Activated CD8-positive, alpha-beta memory T cell treated with anti-CD3 and anti-CD28 coated beads, Interleukin-2, amount 10 ng/mL, durations not matched to agents 7 days and 5 days (primary cell): ENCODE measurements at regions of chr16 and their contacts with region 1.

Region 1: GRCh38 chr16:30902029-30902972 is 5.9 kb downstream of the CTF1 start:
- DNase-seq: peak; percentile 66
- ATAC-seq: peak; percentile 88
- H3K4me3 Mint-ChIP-seq: peak overlapping the region; percentile 81
- H3K27ac Mint-ChIP-seq: peak overlapping the region; percentile 99
- H3K4me1 Mint-ChIP-seq: peaks cover 34% of the 10 kb centered on the region
- H3K27me3 Mint-ChIP-seq: no peaks in the 10 kb centered on the region

Region 2: DNA sequence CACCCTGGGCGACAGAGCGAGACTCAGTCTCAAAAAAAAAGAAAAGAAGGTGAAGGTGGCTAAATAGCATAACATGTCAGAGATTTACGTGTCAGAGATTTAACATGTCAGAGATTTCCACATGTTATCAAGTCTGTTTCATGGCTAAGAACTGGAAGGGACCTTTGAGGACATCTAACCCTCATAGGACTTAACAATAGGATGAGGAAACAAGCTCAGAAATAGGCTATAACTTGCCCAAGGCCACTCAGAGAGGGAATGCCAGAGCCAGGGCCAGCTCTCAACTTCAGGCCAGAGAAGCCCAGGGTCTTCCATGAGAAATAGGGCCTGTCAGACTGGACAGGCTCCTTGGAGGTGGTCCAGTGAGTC is 88.5 kb before region 1 on chr16:
- CTCF ChIA-PET with region 1: interaction called, 18 read pairs
- DNase-seq: no peak
- ATAC-seq: no peak
- H3K4me3 Mint-ChIP-seq: peak overlapping the region; percentile 94
- H3K27ac Mint-ChIP-seq: peak overlapping the region; percentile 88
- H3K4me1 Mint-ChIP-seq: peaks cover 12% of the 10 kb centered on the region
- H3K27me3 Mint-ChIP-seq: peaks cover 2% of the 10 kb centered on the region

Region 3: GRCh38 chr16:30853758-30854157 is 48.5 kb before region 1 on chr16:
- CTCF ChIA-PET with region 1: interaction called, 12 read pairs
- DNase-seq: no peak
- ATAC-seq: no peak
- H3K4me3 Mint-ChIP-seq: no peak overlapping the region
- H3K27ac Mint-ChIP-seq: no peak overlapping the region
- H3K4me1 Mint-ChIP-seq: peaks cover 3% of the 10 kb centered on the region
- H3K27me3 Mint-ChIP-seq: no peaks in the 10 kb centered on the region

Region 4: DNA sequence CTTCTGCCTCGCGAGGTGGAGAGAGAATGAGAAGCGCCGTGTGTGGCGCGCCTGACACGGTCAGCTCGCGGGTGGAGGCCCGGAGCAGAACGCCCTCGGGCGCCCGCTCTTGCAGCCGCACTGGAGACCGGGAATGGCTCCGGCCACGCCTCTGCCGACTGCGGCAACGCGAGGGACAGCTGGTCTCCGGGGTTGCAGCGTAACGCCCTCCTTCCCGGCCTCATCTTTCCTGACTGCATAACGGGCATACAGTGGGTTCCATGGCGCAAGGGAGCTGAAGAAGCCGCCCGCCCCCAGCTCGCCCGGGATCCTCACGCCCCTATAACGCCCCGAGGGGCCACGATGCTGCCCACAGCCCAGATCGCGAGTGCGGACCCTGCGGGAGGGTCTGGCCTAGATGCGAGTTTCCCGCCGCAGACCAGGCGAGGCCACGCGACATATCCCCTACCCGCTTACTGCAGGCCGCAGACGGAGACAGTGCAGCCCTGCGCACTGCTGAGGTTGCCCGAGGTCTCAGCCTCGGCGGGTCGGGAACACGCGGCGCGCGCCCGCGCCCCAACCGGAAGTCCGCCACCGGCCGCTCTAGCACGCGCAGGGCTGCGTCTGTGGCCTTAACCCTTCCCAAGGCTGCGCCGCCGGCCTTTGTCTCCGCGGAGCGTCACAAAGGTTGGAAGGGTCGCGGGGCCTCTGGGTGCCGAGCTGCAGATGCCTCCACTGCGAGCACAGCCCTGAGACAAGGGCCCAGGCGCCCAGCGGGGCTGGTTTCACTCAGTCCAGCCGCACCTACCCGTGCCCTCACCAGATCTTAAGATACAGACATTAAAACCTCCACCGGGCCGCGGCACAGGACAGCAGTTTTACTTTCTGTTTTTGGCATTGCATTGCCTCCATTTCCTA is 27.2 kb before region 1 on chr16:
- CTCF ChIA-PET with region 1: interaction called, 53 read pairs
- DNase-seq: peak; percentile 92
- ATAC-seq: peak; percentile 90
- H3K4me3 Mint-ChIP-seq: peak overlapping the region; percentile 82
- H3K27ac Mint-ChIP-seq: peak overlapping the region; percentile 93
- H3K4me1 Mint-ChIP-seq: peaks cover 37% of the 10 kb centered on the region
- H3K27me3 Mint-ChIP-seq: no peaks in the 10 kb centered on the region

Region 5: DNA sequence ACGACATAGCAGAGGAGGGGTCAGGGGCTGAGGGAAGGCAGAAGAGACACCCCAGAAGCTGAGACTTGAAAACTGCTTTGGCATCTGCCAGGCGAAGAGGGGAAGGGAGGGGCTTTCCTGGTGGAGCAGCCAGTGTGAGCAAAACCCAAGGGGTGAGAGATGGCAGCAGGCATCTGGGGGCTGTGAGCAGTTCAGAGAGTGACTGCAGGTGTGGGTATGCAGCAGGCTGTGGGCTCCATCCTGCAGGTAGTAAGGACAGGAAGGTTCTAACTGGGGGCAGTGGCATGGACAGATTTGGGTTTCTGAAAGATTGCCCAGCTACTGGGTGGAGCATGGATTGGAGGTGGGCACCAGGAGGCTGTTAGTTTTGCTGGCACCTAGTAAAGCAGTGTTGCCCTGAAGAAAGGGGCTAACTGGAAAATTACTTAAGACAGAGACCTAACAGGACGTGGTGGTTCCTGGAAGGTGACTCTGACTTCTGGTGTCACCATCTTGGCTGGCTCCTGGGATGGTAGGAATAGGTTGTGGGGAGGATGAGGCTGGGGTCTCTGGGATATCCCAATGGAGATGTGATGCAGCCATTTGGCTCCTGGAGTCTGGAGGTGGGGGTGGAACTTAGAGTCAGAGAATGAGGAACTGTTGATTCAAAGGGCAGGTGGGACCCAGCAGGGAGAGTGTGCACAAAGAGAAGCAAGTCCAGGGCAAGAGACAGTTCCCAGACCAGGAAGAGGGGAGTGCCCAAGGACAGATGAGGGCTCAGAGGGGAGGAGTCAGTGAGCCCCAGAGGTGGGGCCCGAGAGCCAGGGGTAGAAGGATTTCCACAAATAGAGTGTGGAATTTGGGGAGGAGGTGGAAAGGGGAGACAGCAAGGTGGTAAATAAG is 19.6 kb before region 1 on chr16:
- CTCF ChIA-PET with region 1: interaction called, 53 read pairs
- DNase-seq: peak; percentile 43
- ATAC-seq: peak; percentile 65
- H3K4me3 Mint-ChIP-seq: no peak overlapping the region
- H3K27ac Mint-ChIP-seq: peak overlapping the region; percentile 79
- H3K4me1 Mint-ChIP-seq: peaks cover 39% of the 10 kb centered on the region
- H3K27me3 Mint-ChIP-seq: no peaks in the 10 kb centered on the region

Region 6: GRCh38 chr16:30914830-30915229 is 12.5 kb after region 1 on chr16:
- CTCF ChIA-PET with region 1: interaction called, 13 read pairs
- DNase-seq: no peak
- ATAC-seq: no peak
- H3K4me3 Mint-ChIP-seq: no peak overlapping the region
- H3K27ac Mint-ChIP-seq: no peak overlapping the region
- H3K4me1 Mint-ChIP-seq: no peaks in the 10 kb centered on the region
- H3K27me3 Mint-ChIP-seq: no peaks in the 10 kb centered on the region

Region 7: DNA sequence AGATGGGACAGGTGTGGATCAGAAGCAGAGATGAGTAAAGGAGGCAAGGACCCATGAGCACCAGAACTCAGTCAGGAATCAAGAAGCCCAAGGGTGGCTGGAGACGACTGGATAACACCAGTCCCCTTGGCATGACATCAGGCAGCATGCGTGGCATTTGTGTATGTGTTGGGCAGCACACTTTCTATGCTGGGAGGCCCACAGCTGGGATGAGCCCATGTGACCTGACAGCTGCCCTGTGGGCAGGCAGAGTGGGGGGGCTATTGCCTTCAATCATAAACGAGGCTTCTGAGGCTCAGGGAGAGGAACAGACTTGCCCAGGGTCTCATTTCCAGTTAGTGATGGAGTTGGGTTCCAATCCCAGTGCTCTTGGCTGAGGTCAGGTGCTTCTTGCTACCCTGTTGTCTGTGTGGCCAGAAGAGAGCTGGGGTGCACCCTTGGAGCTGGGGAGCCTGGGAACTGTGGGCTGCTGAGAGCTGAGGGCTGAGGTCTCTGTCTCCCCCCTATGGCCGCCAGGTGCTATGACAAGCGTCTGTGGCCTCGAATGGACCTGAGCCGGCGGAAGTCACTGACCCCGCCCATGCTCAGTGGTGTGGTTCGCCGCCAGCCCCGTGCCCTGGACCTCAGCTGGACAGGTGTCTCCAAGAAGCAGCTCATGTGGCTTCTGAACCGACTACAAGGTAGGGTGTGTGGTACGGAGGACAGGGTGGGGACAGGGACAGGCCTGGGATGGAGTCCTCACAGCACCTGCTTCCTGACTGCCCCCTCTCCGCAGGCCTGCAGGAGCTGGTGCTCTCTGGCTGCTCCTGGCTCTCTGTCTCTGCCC is 39.5 kb after region 1 on chr16:
- CTCF ChIA-PET with region 1: interaction called, 17 read pairs
- DNase-seq: peak; percentile 86
- ATAC-seq: peak; percentile 96
- H3K4me3 Mint-ChIP-seq: peak overlapping the region; percentile 69
- H3K27ac Mint-ChIP-seq: peak overlapping the region; percentile 80
- H3K4me1 Mint-ChIP-seq: peaks cover 41% of the 10 kb centered on the region
- H3K27me3 Mint-ChIP-seq: no peaks in the 10 kb centered on the region